ENCODE measurements at regions of chr6 and their contacts with region 1.

Region 1: DNA sequence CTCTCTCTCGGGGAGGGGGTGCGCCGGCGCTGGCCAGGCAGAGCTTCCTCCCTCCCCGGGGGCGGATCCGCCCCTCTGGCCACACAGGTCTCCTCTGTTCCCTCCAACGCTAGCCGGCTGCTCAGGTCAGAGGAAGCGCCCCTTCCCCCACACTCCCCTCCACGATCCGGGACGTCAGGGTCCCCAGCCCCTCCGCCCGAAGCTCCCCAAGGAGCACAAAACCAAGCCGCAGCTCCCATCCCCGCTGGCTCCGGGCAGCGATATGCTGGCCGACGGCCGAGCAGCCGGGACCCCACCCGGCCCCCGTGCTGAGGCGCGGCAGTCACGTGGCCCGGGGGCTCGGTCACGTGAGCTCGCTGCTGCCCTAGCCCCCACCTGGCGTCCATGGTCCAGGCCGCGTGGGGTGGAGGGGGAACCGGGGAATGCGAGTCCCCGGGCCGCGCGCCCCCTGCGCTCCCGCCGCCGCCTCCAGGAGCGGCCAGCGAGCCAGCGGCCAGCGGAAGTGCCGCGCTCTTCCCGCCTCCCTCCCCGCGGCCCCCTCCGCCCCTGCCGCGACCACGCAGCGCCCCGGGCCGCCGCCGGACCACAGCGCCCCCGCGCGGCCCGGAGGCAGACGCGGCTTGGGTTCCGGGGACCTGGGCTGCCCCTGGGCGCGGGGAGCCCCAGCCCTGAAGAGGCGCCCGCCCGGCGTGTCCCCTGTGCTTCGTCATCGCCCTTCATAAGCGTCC is at the start of gene SLC35B2:
- DNase-seq: peak; percentile 92 to 94 (median 93)
- ATAC-seq: peak; percentile 71
- H3K4me3 ChIP-seq: peak within 1 kb of the TSS; percentile 81
- H3K27ac ChIP-seq: peak within 1 kb of the TSS; percentile 93
- H3K4me1 ChIP-seq: peaks cover 32 to 45% of the 10 kb centered on the region in 2 experiments; a peak in 4 of 5 replicates
- H3K27me3 ChIP-seq: no peaks in the 10 kb centered on the region
- CTCF ChIP-seq: peak; percentile 70 to 90 (median 78); a peak in 5 of 6 replicates
- EP300 ChIP-seq: peak; percentile 33
- POLR2A ChIP-seq: peak; percentile 75
- RAD21 ChIP-seq: peak in 1 of 2 experiments; percentile 57; a peak in 3 of 4 replicates
- polyA plus RNA-seq, gene SLC35B2: 14.5 to 19.2 TPM

Region 2: DNA sequence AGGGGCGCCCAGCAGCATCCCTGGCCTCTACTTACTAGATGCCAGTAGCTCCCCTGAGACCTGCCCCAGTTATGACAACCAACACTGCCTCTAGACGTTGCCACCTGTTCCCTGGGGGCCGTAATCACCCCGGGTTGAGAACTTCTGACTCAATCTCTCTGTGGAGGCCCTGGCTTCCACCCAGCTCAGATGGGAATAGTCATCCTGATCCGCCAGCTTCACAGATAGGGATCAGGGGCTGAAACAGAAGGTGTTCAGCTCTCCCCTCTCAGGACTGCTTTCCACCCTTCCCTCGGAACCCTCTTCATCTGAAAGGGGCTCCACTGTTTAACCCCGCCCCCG is 95.2 kb before region 1 on chr6:
- CTCF ChIA-PET with region 1: no interaction called
- POLR2A ChIA-PET with region 1: interaction called, 13 read pairs
- in situ Hi-C with region 1: no loop called
- intact Hi-C with region 1: no loop called
- DNase-seq: peak in 2 of 4 experiments; percentile 57 to 59
- ATAC-seq: no peak
- H3K4me3 ChIP-seq: no peak overlapping the region
- H3K27ac ChIP-seq: no peak overlapping the region
- H3K4me1 ChIP-seq: peaks cover 8 to 13% of the 10 kb centered on the region in 2 experiments; a peak in 4 of 5 replicates
- H3K27me3 ChIP-seq: peaks cover 3 to 14% of the 10 kb centered on the region in 2 experiments; a peak in 3 of 5 replicates
- CTCF ChIP-seq: no peak
- EP300 ChIP-seq: no peak
- POLR2A ChIP-seq: no peak
- RAD21 ChIP-seq: no peak

Measured in K562 (cell line).